ENCODE measurements at regions of chrX and their contacts with region 1.

Region 1: GRCh38 chrX:130060122-130061069 is 49.9 kb downstream of the ELF4 start:
- DNase-seq: peak; percentile 67
- H3K4me3 ChIP-seq: peak overlapping the region; percentile 41 to 48 (median 43)
- H3K27ac ChIP-seq: no peak overlapping the region
- H3K4me1 ChIP-seq: peaks cover 5% of the 10 kb centered on the region
- H3K27me3 ChIP-seq: no peaks in the 10 kb centered on the region
- CTCF ChIP-seq: peak; percentile 48 to 74

Region 2: GRCh38 chrX:129092242-129092641 is 968.2 kb before region 1 on chrX:
- CTCF ChIA-PET with region 1: no interaction called
- dilution Hi-C with region 1: no loop called
- in situ Hi-C with region 1: no loop called
- intact Hi-C with region 1: no loop called
- DNase-seq: no peak
- H3K4me3 ChIP-seq: no peak overlapping the region
- H3K27ac ChIP-seq: no peak overlapping the region
- H3K4me1 ChIP-seq: no peaks in the 10 kb centered on the region
- H3K27me3 ChIP-seq: no peaks in the 10 kb centered on the region
- CTCF ChIP-seq: no peak

Region 3: GRCh38 chrX:129637217-129638109 is 422.9 kb before region 1 on chrX:
- CTCF ChIA-PET with region 1: interaction called, 3 read pairs
- dilution Hi-C with region 1: no loop called
- in situ Hi-C with region 1: no loop called
- intact Hi-C with region 1: loop called (anchors 5 kb)
- DNase-seq: peak; percentile 40
- H3K4me3 ChIP-seq: no peak overlapping the region
- H3K27ac ChIP-seq: no peak overlapping the region
- H3K4me1 ChIP-seq: peaks cover 5% of the 10 kb centered on the region
- H3K27me3 ChIP-seq: no peaks in the 10 kb centered on the region
- CTCF ChIP-seq: peak; percentile 92 to 96

Region 4: GRCh38 chrX:129842510-129843208 is 217.7 kb before region 1 on chrX:
- CTCF ChIA-PET with region 1: no interaction called
- dilution Hi-C with region 1: no loop called
- in situ Hi-C with region 1: no loop called
- intact Hi-C with region 1: loop called (anchors 1 kb)
- DNase-seq: peak; percentile 17
- H3K4me3 ChIP-seq: peak overlapping the region; percentile 55 to 82 (median 66)
- H3K27ac ChIP-seq: peak overlapping the region; percentile 34
- H3K4me1 ChIP-seq: peaks cover 3% of the 10 kb centered on the region
- H3K27me3 ChIP-seq: no peaks in the 10 kb centered on the region
- CTCF ChIP-seq: no peak

Region 5: DNA sequence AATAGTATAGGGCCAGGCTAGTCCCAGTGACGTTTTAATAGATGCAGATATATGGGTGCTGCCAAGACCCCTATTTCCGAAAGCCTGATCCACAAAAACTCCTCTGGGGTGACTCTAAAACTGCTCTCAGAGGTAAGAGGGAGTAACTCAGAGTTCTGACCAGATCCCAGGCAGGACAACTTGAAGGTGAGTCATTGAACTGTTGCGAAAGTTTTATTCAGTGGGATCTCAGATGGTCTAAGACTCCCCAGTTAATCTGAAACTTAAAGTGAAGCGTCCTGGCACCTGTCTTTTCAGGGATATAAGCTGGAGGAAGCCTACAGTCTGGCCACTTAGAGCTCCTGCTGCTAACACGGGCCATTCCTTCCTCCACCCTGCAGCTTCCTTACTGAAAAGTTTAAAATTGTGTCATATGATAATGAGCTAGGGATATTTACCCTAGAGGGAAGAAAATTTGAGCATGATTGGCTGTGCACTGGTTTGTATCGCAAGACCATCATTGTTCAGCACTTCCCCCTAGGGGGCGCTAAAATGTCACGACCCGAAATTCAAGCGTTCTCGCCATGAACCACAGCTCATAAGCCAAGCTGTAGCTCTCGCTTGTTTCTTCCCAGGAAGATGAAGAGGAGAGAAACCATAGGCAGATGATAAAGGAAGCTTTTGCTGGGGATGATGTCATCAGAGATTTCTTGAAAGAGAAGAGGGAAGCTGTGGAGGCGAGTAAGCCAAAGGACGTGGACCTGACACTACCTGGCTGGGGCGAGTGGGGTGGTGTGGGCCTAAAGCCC is 134.9 kb before region 1 on chrX:
- CTCF ChIA-PET with region 1: no interaction called
- dilution Hi-C with region 1: no loop called
- in situ Hi-C with region 1: no loop called
- intact Hi-C with region 1: loop called (anchors 1 kb)
- DNase-seq: peak; percentile 50
- H3K4me3 ChIP-seq: no peak overlapping the region
- H3K27ac ChIP-seq: no peak overlapping the region
- H3K4me1 ChIP-seq: peaks cover 3% of the 10 kb centered on the region
- H3K27me3 ChIP-seq: no peaks in the 10 kb centered on the region
- CTCF ChIP-seq: peak; percentile 53 to 55